Keratinocyte (primary cell): ENCODE measurements at regions of chr9 and their contacts with region 1.

Region 1: DNA sequence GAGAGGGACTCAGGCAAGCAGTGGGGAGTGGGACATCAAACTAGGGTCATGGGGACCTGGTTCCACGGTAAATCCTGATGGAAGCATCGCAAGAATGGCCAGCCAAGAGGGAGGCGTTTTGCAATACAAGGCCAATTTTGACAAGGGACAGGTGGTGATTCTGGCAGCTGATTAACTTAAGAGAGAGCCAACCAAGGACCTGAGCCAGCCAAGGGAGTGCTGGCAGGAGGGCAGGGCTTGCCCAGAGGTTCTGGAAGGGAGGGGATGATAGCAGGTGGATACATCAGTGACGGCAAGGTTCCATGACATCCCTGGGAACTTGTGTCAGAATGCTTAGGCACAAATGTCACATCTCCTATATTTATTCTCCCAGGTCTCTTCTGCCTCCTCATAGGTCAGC is 32.8 kb upstream of the PUM3 start:
- DNase-seq: no peak
- H3K4me3 ChIP-seq: no peak overlapping the region
- H3K27ac ChIP-seq: no peak overlapping the region
- H3K4me1 ChIP-seq: no peaks in the 10 kb centered on the region
- H3K27me3 ChIP-seq: peaks cover 14% of the 10 kb centered on the region
- CTCF ChIP-seq: no peak

Region 2: GRCh38 chr9:3181049-3181953 is 304.6 kb after region 1 on chr9:
- dilution Hi-C with region 1: loop called (anchors 25 kb)
- DNase-seq: peak; percentile 1
- H3K4me3 ChIP-seq: peak overlapping the region in 2 of 3 experiments; percentile 18 to 20
- H3K27ac ChIP-seq: no peak overlapping the region
- H3K4me1 ChIP-seq: no peaks in the 10 kb centered on the region
- H3K27me3 ChIP-seq: peaks cover 26% of the 10 kb centered on the region
- CTCF ChIP-seq: peak; percentile 48 to 90 (median 79)